Heart right ventricle (tissue), 16 donors: ENCODE measurements at regions of chr6 and their contacts with region 1.

Region 1: GRCh38 chr6:162177746-162178145 is 549.8 kb downstream of the PRKN start:
- DNase-seq: peak in 1 of 2 donors; percentile 47
- ATAC-seq: peak; percentile 78 to 93 (median 84)
- H3K4me3 ChIP-seq: no peak overlapping the region
- H3K27ac ChIP-seq: peak overlapping the region in 9 of 10 donors; percentile 24 to 84 (median 64)
- H3K4me1 ChIP-seq: peaks cover 0 to 29% (median 15%) of the 10 kb centered on the region in 9 donors
- H3K27me3 ChIP-seq: no peaks in the 10 kb centered on the region
- CTCF ChIP-seq: peak; percentile 10 to 71 (median 37)

Region 2: DNA sequence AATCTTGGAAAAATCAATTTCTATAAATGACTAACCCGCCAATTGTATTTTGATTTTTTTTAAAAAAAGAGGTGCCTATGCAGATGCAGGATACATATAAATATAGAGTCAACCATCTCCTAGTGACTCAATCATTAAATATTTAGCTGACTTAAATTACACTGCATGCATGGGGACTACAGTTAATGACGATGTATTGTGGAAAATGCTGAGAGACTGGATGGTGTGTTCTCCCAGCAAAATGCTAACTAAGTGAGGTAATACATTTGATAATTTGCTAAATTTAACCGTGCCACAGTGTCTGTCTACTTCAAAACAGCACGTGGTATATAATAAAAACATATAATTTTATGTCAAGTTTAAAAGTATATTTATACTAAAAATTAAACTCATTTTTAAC is 208.2 kb after region 1 on chr6:
- intact Hi-C with region 1: loop called in 1 of 10 experiments (anchors 10 kb)
- DNase-seq: no peak
- ATAC-seq: peak in 5 of 8 donors; percentile 40 to 69 (median 52)
- H3K4me3 ChIP-seq: no peak overlapping the region
- H3K27ac ChIP-seq: peak overlapping the region in 2 of 10 donors; percentile 42 to 80
- H3K4me1 ChIP-seq: peaks cover 0 to 34% (median 14%) of the 10 kb centered on the region in 9 donors
- H3K27me3 ChIP-seq: no peaks in the 10 kb centered on the region
- CTCF ChIP-seq: no peak

Region 3: GRCh38 chr6:162442687-162443086 is 264.9 kb after region 1 on chr6:
- intact Hi-C with region 1: loop called in 1 of 10 experiments (anchors 10 kb)
- DNase-seq: no peak
- ATAC-seq: peak in 7 of 8 donors; percentile 60 to 76 (median 67)
- H3K4me3 ChIP-seq: no peak overlapping the region
- H3K27ac ChIP-seq: no peak overlapping the region
- H3K4me1 ChIP-seq: peaks cover 0 to 4% (median 0%) of the 10 kb centered on the region in 9 donors
- H3K27me3 ChIP-seq: no peaks in the 10 kb centered on the region
- CTCF ChIP-seq: peak in 7 of 9 donors; percentile 34 to 57 (median 52)

Region 4: GRCh38 chr6:162736961-162737360 is 559.2 kb after region 1 on chr6:
- intact Hi-C with region 1: loop called in 2 of 10 experiments (anchors 5 to 10 kb)
- DNase-seq: no peak
- ATAC-seq: peak in 6 of 8 donors; percentile 39 to 72 (median 56)
- H3K4me3 ChIP-seq: no peak overlapping the region
- H3K27ac ChIP-seq: no peak overlapping the region
- H3K4me1 ChIP-seq: peaks cover 0 to 7% (median 0%) of the 10 kb centered on the region in 9 donors
- H3K27me3 ChIP-seq: no peaks in the 10 kb centered on the region
- CTCF ChIP-seq: peak in 7 of 9 donors; percentile 24 to 69 (median 56)